ENCODE measurements at regions of chr9 and their contacts with region 1.

Region 1: GRCh38 chr9:19174127-19174912 is 47.0 kb upstream of the PLIN2 start:
- DNase-seq: peak; percentile 23 to 37
- H3K4me3 ChIP-seq: no peak overlapping the region
- H3K27ac ChIP-seq: no peak overlapping the region
- H3K4me1 ChIP-seq: no peaks in the 10 kb centered on the region
- H3K27me3 ChIP-seq: no peaks in the 10 kb centered on the region
- CTCF ChIP-seq: peak; percentile 66

Region 2: GRCh38 chr9:19028835-19029451 is 145.4 kb before region 1 on chr9:
- CTCF ChIA-PET with region 1: interaction called, 16 read pairs
- POLR2A ChIA-PET with region 1: no interaction called
- intact Hi-C with region 1: no loop called
- DNase-seq: peak; percentile 12 to 36
- H3K4me3 ChIP-seq: no peak overlapping the region
- H3K27ac ChIP-seq: no peak overlapping the region
- H3K4me1 ChIP-seq: no peaks in the 10 kb centered on the region
- H3K27me3 ChIP-seq: no peaks in the 10 kb centered on the region
- CTCF ChIP-seq: peak; percentile 76

Region 3: GRCh38 chr9:19048966-19049916 is 125.1 kb before region 1 on chr9 and contains the start of gene RRAGA:
- CTCF ChIA-PET with region 1: no interaction called
- POLR2A ChIA-PET with region 1: no interaction called
- intact Hi-C with region 1: loop called (anchors 1 kb)
- DNase-seq: peak; percentile 84 to 90
- H3K4me3 ChIP-seq: peak within 1 kb of the TSS; percentile 92
- H3K27ac ChIP-seq: peak within 1 kb of the TSS; percentile 78
- H3K4me1 ChIP-seq: peaks cover 24% of the 10 kb centered on the region
- H3K27me3 ChIP-seq: no peaks in the 10 kb centered on the region
- CTCF ChIP-seq: peak; percentile 83
- total RNA-seq, gene RRAGA: 25.2 and 30.1 TPM in 2 replicates

Region 4: DNA sequence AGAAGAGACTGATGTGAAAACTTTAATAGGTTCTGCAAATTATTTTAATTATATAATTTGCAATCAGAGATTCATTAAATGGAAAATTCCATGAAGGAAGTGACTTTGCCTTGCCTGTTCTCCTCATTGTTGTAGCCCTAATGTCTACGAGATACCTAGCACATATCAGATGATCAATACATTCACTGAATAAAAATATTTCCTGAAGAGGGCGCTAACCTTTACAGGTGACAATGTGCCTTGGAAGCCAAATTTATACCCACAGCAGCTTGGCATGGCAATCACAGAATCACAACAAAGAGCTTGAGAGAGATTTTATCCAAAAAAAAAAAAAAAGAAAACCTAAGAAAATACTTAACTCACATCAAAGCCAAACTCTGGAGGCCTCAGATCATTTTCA is 89.0 kb before region 1 on chr9:
- CTCF ChIA-PET with region 1: interaction called, 12 read pairs
- POLR2A ChIA-PET with region 1: no interaction called
- intact Hi-C with region 1: loop called (anchors 5 kb)
- DNase-seq: no peak
- H3K4me3 ChIP-seq: no peak overlapping the region
- H3K27ac ChIP-seq: no peak overlapping the region
- H3K4me1 ChIP-seq: no peaks in the 10 kb centered on the region
- H3K27me3 ChIP-seq: no peaks in the 10 kb centered on the region
- CTCF ChIP-seq: peak; percentile 55

Region 5: GRCh38 chr9:19102631-19103345 is 71.5 kb before region 1 on chr9 and contains the start of gene HAUS6:
- CTCF ChIA-PET with region 1: interaction called, 4 read pairs
- POLR2A ChIA-PET with region 1: no interaction called
- intact Hi-C with region 1: loop called (anchors 2 kb)
- DNase-seq: peak; percentile 81 to 86
- H3K4me3 ChIP-seq: peak within 1 kb of the TSS; percentile 64
- H3K27ac ChIP-seq: peak within 1 kb of the TSS; percentile 77
- H3K4me1 ChIP-seq: peaks cover 10% of the 10 kb centered on the region
- H3K27me3 ChIP-seq: no peaks in the 10 kb centered on the region
- CTCF ChIP-seq: peak; percentile 45; the same call in 1 of the 2 replicates
- total RNA-seq, gene HAUS6: 13.3 and 19.1 TPM in 2 replicates

Region 6: DNA sequence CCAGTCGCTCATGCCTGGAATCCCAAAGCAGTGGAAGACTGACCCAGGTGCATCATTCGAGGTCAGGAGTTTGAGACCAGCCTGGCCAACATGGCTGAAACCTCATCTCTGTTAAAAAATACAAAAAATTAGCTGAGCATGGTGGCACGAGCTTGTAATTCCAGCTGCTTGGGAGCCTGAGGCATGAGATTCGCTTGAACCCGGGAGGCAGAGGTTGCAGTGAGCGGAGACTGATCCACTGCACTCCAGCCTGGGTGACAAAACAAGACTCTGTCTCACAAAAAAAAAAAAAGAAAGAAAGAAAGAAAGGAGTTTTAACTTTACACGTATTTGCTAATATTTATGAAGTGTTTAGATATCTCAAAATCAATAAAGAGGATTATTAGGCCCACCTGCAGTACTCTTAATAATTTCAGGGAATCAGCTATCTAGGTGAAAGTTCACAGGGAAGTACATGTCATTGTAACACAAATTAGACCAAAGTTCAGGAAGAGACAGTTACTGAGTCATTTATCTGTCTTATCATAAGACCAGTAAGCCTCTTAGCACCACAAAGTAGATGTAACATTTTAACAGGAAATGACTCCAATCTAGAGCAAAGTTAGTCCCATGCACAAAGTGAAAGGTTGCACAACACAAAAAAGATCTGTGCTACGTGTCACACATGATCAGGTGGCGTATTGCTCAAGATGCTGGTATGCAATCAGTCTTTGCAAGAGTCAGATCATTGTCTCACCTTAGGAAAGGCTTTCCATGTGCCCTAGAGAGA is 12.9 kb before region 1 on chr9:
- CTCF ChIA-PET with region 1: interaction called, 11 read pairs
- POLR2A ChIA-PET with region 1: no interaction called
- intact Hi-C with region 1: no loop called
- DNase-seq: peak; percentile 41 to 97
- H3K4me3 ChIP-seq: no peak overlapping the region
- H3K27ac ChIP-seq: peak overlapping the region; percentile 98
- H3K4me1 ChIP-seq: peaks cover 18% of the 10 kb centered on the region
- H3K27me3 ChIP-seq: no peaks in the 10 kb centered on the region
- CTCF ChIP-seq: no peak

Region 7: GRCh38 chr9:19379697-19380046 is 205.4 kb after region 1 on chr9:
- CTCF ChIA-PET with region 1: no interaction called
- POLR2A ChIA-PET with region 1: no interaction called
- intact Hi-C with region 1: no loop called
- DNase-seq: no peak
- H3K4me3 ChIP-seq: peak overlapping the region; percentile 98
- H3K27ac ChIP-seq: peak overlapping the region; percentile 94
- H3K4me1 ChIP-seq: peaks cover 28% of the 10 kb centered on the region
- H3K27me3 ChIP-seq: no peaks in the 10 kb centered on the region
- CTCF ChIP-seq: no peak

Region 8: GRCh38 chr9:19456996-19457692 is 282.8 kb after region 1 on chr9:
- CTCF ChIA-PET with region 1: no interaction called
- POLR2A ChIA-PET with region 1: no interaction called
- intact Hi-C with region 1: loop called (anchors 2 kb)
- DNase-seq: peak; percentile 45 to 59
- H3K4me3 ChIP-seq: no peak overlapping the region
- H3K27ac ChIP-seq: no peak overlapping the region
- H3K4me1 ChIP-seq: no peaks in the 10 kb centered on the region
- H3K27me3 ChIP-seq: no peaks in the 10 kb centered on the region
- CTCF ChIP-seq: peak; percentile 83

Region 9: DNA sequence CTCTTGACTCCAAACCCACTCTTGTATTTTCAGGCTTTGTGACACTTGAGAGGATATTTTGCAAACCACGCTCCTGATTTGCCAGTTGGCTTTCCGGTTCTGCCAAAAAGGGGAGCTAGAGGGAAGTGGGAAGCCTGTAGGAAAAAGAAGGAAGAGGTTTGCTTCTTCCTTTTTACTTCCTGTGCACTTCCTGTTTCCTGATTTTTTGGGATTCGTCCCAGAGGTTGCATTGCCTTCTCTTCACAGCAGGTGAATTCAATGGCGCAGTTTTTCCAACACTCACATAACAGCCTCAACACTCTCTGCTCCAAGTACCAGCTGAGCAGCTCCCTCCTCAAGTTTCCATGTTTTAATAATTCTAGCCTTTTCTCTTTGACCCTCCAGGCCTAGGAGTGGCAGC is 566.9 kb after region 1 on chr9:
- CTCF ChIA-PET with region 1: no interaction called
- POLR2A ChIA-PET with region 1: no interaction called
- intact Hi-C with region 1: no loop called
- DNase-seq: no peak
- H3K4me3 ChIP-seq: no peak overlapping the region
- H3K27ac ChIP-seq: no peak overlapping the region
- H3K4me1 ChIP-seq: no peaks in the 10 kb centered on the region
- H3K27me3 ChIP-seq: no peaks in the 10 kb centered on the region
- CTCF ChIP-seq: no peak